ENCODE measurements at regions of chr11 and their contacts with region 1.

Region 1: DNA sequence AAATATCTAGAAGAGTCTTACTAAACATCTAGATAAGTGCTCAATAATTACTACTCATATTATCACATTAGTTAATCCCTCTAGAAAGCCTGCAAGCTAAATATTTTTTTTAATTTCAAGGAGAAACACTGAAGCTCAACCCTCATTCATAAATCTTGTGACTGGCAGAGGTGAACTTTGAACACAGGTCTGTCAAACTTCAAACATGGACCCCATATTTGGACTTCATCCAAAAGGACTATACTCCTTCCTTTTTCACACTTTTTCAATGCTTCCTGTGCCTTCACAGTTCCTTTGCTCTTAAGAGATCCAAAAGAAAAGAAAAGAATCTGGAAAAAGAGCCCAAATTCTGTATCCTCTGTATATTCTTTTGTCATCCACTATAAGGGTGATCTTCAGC is 28.3 kb upstream of the OR9G4 start:
- DNase-seq: no peak
- ATAC-seq: no peak
- H3K4me3 ChIP-seq: no peak overlapping the region
- H3K27ac ChIP-seq: no peak overlapping the region
- H3K4me1 ChIP-seq: no peaks in the 10 kb centered on the region
- H3K27me3 ChIP-seq: peaks cover 0 to 7% (median 0%) of the 10 kb centered on the region in 9 donors
- CTCF ChIP-seq: no peak
- POLR2A ChIP-seq: no peak

Region 2: GRCh38 chr11:56624661-56625110 is 152.1 kb before region 1 on chr11:
- intact Hi-C with region 1: loop called in 5 of 10 experiments (anchors 5 to 10 kb)
- DNase-seq: no peak
- ATAC-seq: peak in 2 of 4 donors; percentile 48 to 81
- H3K4me3 ChIP-seq: no peak overlapping the region
- H3K27ac ChIP-seq: no peak overlapping the region
- H3K4me1 ChIP-seq: no peaks in the 10 kb centered on the region
- H3K27me3 ChIP-seq: no peaks in the 10 kb centered on the region
- CTCF ChIP-seq: peak in 11 of 12 donors; percentile 7 to 54 (median 35)
- POLR2A ChIP-seq: no peak

Region 3: DNA sequence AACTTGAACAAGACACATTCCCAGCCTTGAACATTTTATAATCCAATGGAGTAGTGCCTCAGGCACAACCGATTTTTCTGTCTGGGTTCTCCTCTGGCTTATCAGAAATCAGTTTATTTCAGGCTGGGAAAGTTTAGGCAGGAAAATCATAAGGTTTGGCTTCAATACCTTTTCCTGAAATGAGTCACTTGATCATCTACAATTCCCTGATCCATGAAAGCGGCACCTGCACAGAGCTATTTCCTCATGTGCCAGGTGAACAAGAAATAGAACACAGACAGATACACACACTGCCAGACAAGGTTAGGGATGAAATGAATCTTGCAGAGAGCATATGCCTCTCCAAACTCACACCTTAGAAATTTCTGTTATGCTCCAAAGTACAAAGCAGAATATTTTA is 78.4 kb after region 1 on chr11:
- intact Hi-C with region 1: no loop called
- DNase-seq: no peak
- ATAC-seq: no peak
- H3K4me3 ChIP-seq: no peak overlapping the region
- H3K27ac ChIP-seq: no peak overlapping the region
- H3K4me1 ChIP-seq: no peaks in the 10 kb centered on the region
- H3K27me3 ChIP-seq: peaks cover 0 to 4% (median 0%) of the 10 kb centered on the region in 9 donors
- CTCF ChIP-seq: no peak
- POLR2A ChIP-seq: no peak